Activated naive CD4-positive, alpha-beta T cell treated with anti-CD3 and anti-CD28 coated beads, Interleukin-2, amount 10 ng/mL, durations not matched to agents 7 days and 5 days (primary cell): ENCODE measurements at regions of chr10 and their contacts with region 1.

Region 1: GRCh38 chr10:71569775-71570588 is 149.6 kb downstream of the C10orf105 start:
- DNase-seq: peak; percentile 86
- H3K4me3 Mint-ChIP-seq: no peak overlapping the region
- H3K27ac Mint-ChIP-seq: no peak overlapping the region
- H3K4me1 Mint-ChIP-seq: peaks cover 3% of the 10 kb centered on the region
- H3K27me3 Mint-ChIP-seq: peaks cover 4% of the 10 kb centered on the region

Region 2: GRCh38 chr10:71319042-71319799 is 250.8 kb before region 1 on chr10 and contains the start of gene SLC29A3:
- CTCF ChIA-PET with region 1: interaction called, 60 read pairs
- DNase-seq: peak; percentile 89
- H3K4me3 Mint-ChIP-seq: peak within 1 kb of the TSS; percentile 94
- H3K27ac Mint-ChIP-seq: peak within 1 kb of the TSS; percentile 61
- H3K4me1 Mint-ChIP-seq: peaks cover 42% of the 10 kb centered on the region
- H3K27me3 Mint-ChIP-seq: peaks cover 16% of the 10 kb centered on the region

Region 3: GRCh38 chr10:71396084-71396720 is 173.8 kb before region 1 on chr10:
- CTCF ChIA-PET with region 1: interaction called, 14 read pairs
- DNase-seq: peak; percentile 46
- H3K4me3 Mint-ChIP-seq: peak overlapping the region; percentile 37
- H3K27ac Mint-ChIP-seq: no peak overlapping the region
- H3K4me1 Mint-ChIP-seq: peaks cover 6% of the 10 kb centered on the region
- H3K27me3 Mint-ChIP-seq: peaks cover 94% of the 10 kb centered on the region

Region 4: GRCh38 chr10:71522442-71523144 is 47.4 kb before region 1 on chr10:
- CTCF ChIA-PET with region 1: interaction called, 25 read pairs
- DNase-seq: no peak
- H3K4me3 Mint-ChIP-seq: no peak overlapping the region
- H3K27ac Mint-ChIP-seq: no peak overlapping the region
- H3K4me1 Mint-ChIP-seq: no peaks in the 10 kb centered on the region
- H3K27me3 Mint-ChIP-seq: peaks cover 34% of the 10 kb centered on the region

Region 5: GRCh38 chr10:71587941-71588573 is 18.1 kb after region 1 on chr10:
- CTCF ChIA-PET with region 1: interaction called, 14 read pairs
- DNase-seq: no peak
- H3K4me3 Mint-ChIP-seq: no peak overlapping the region
- H3K27ac Mint-ChIP-seq: no peak overlapping the region
- H3K4me1 Mint-ChIP-seq: no peaks in the 10 kb centered on the region
- H3K27me3 Mint-ChIP-seq: peaks cover 33% of the 10 kb centered on the region